ENCODE measurements at regions of chr7 and their contacts with region 1.

Region 1: DNA sequence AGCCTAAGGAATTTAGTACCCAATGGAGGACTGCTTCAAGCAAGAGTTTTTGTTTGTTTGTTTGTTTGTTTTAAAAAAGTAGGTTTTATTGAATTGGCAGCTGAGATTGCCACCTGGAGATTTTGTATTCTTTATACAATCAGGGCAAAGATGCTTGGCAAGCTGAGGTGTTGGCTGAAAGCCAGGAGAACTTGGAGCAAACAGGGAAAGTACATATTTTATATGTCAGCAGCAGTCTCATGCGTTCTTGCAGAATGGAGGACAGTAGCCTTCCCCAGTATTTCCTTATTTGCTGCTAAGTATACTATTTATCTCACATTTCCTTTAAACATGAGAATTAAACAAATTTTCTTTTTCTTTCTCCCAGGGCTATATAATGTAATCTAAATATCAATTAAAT is 22.6 kb upstream of the ICA1 start:
- DNase-seq: no peak
- ATAC-seq: no peak

Region 2: DNA sequence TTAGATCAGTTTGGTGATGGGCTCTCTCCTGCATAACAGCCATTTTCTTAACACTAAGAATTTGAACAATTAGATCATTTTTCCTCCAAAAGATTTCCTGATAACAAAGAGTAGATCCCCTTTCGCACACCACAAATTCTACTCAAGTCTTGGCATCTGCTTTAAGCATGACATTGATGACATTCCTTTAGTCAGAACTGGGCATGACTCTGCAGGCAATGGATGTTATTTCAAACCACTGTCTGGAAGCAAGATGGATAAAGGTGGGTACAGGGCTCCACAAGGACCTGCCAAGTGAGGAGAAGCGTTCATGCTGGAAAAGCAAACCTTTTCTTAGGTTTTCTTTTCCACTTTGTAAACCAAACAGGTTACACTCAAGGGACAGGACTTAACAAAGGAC is 192.5 kb before region 1 on chr7:
- intact Hi-C with region 1: no loop called
- DNase-seq: no peak
- ATAC-seq: no peak

Region 3: DNA sequence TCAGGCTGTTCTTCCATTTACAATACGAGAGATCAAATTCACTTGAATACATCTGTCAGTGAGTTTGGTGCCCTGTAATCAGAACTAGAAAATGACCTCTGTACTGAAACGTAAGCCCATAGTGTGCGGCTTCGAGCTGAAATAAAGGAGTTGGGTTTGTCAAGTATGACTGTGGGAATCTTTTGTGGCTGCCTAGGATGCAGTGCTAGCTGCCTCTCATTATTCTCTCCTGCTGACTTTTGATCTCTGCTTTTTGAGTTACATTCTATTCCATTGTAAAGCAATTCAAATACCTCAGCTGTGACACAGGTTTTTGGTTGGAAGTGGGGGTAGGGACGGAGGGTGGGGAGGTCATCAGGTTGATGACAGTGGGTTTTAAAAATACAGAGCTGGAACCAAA is 63.0 kb before region 1 on chr7:
- intact Hi-C with region 1: no loop called
- DNase-seq: no peak
- ATAC-seq: no peak

Region 4: DNA sequence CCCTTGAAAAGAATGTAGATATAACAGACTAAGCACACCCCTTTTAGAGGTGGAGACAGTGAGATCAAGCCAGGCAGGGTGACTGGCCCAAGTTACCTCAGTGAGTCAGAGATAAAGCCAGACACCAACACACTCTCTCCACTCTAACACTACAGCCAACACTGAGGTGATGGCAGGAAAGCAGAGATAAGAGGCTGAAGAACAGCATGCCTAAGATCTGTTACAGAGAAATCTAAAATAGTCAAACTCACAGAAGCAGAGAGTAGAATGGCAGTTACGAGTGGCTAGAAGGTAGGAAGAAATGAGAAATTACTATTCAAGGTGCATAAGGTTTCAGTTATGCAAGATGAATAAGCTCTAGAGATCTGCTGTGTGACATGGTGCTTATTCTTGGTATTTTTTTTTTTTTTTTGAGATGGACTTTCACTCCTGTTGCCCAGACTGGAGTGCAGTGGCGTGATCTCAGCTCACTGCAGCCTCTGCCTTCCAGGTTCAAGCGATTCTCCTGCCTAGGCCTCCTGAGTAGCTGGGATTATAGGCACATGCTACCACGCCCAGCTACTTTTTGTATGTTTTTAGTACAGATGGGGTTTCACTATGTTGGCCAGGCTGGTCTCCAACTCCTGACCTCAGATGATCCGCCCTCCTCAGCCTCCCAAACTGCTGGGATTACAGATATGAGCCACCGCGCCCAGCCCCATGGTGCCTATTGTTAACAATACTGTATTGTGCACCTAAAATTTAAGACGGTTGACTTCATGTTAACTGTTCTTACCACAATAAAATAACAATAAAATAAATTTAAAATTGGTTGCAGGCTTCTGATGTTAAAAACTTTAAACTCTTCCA is 51.4 kb before region 1 on chr7:
- intact Hi-C with region 1: loop called (anchors 2 kb)
- DNase-seq: no peak
- ATAC-seq: peak; percentile 92

Region 5: GRCh38 chr7:8261711-8262695 is 22.6 kb before region 1 on chr7 and contains the start of gene ICA1:
- intact Hi-C with region 1: loop called (anchors 2 kb)
- DNase-seq: peak; percentile 79
- ATAC-seq: peak; percentile 88
- total RNA-seq, gene ICA1: 44.3 TPM